MCF 10A (cell line): ENCODE measurements at regions of chr12 and their contacts with region 1.

Region 1: DNA sequence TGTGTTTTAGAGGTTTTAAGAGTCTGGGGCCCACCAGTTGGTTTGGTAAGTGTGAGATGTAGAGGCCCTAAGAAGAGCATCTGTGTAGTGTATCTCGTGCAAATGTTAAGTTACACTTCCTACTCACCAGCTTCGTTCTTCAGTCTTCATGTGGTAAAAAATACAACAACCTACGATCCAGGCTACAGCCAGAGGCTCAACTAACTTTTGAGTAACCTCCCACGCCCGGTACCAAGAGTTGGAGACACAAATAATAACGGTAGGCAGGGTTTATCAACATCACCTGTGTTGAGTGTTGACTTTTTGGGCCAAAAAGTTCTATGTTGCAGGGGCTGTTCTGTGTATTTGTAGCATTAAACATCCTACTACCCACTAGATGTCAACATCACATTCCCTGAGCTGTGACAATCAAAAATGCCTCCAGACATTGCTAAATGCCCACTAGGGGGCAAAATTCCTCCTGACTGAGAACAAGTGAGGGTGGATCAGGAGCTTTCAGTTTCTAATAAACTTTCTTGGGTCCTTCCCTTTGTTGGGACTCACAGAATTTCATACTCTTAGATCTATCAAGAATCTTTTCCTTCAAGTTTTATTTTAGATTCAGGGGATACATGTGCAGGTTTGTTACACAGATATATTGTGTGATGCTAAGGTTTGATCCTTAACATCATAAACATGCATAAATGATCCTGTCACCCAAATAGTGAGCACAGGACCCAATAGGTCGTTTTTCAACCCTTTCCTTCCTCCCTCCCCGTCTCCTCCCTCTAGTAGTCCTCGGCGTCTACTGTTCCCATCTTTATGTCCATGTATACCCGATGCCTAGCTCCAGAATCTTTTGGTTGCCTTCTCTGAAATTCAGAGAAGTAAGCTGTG is 94.7 kb downstream of the SLC2A13 start:
- DNase-seq: peak; percentile 83
- H3K4me3 Mint-ChIP-seq: peak overlapping the region; percentile 40
- H3K27ac Mint-ChIP-seq: no peak overlapping the region
- H3K4me1 Mint-ChIP-seq: peaks cover 13% of the 10 kb centered on the region
- H3K27me3 Mint-ChIP-seq: no peaks in the 10 kb centered on the region
- CTCF ChIP-seq: peak; percentile 83

Region 2: GRCh38 chr12:39905152-39905551 is 106.0 kb before region 1 on chr12:
- CTCF ChIA-PET with region 1: no interaction called
- POLR2A ChIA-PET with region 1: no interaction called
- intact Hi-C with region 1: no loop called
- DNase-seq: peak; percentile 1
- H3K4me3 Mint-ChIP-seq: no peak overlapping the region
- H3K27ac Mint-ChIP-seq: no peak overlapping the region
- H3K4me1 Mint-ChIP-seq: no peaks in the 10 kb centered on the region
- H3K27me3 Mint-ChIP-seq: no peaks in the 10 kb centered on the region
- CTCF ChIP-seq: no peak

Region 3: GRCh38 chr12:40032433-40033241 is 21.5 kb after region 1 on chr12:
- CTCF ChIA-PET with region 1: interaction called, 21 read pairs
- POLR2A ChIA-PET with region 1: interaction called, 4 read pairs
- intact Hi-C with region 1: no loop called
- DNase-seq: no peak
- H3K4me3 Mint-ChIP-seq: no peak overlapping the region
- H3K27ac Mint-ChIP-seq: no peak overlapping the region
- H3K4me1 Mint-ChIP-seq: peaks cover 6% of the 10 kb centered on the region
- H3K27me3 Mint-ChIP-seq: no peaks in the 10 kb centered on the region
- CTCF ChIP-seq: no peak

Region 4: DNA sequence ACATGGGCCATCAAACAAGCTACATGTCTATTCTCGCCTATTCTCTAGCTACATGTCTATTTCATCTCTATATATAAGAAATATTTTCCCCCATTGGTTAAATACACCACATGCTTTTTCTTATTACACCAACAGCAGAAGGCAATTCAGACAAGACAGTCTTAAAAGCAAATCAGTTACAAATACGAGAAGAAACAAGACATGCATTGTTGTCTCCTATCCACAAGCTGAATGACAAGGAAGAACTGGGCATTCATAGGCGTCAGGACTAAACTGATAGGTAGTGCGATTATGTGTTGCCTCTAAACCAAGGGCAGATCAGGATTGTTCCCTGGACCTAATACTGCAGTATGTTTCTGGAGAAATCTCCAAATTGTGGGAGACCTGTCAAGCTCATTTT is 75.3 kb after region 1 on chr12:
- CTCF ChIA-PET with region 1: interaction called, 11 read pairs
- POLR2A ChIA-PET with region 1: interaction called, 5 read pairs
- intact Hi-C with region 1: no loop called
- DNase-seq: no peak
- H3K4me3 Mint-ChIP-seq: no peak overlapping the region
- H3K27ac Mint-ChIP-seq: no peak overlapping the region
- H3K4me1 Mint-ChIP-seq: no peaks in the 10 kb centered on the region
- H3K27me3 Mint-ChIP-seq: no peaks in the 10 kb centered on the region
- CTCF ChIP-seq: no peak

Region 5: GRCh38 chr12:40117818-40118217 is 106.7 kb after region 1 on chr12:
- CTCF ChIA-PET with region 1: interaction called, 182 read pairs
- POLR2A ChIA-PET with region 1: no interaction called
- intact Hi-C with region 1: no loop called
- DNase-seq: no peak
- H3K4me3 Mint-ChIP-seq: no peak overlapping the region
- H3K27ac Mint-ChIP-seq: no peak overlapping the region
- H3K4me1 Mint-ChIP-seq: no peaks in the 10 kb centered on the region
- H3K27me3 Mint-ChIP-seq: no peaks in the 10 kb centered on the region
- CTCF ChIP-seq: no peak

Region 6: DNA sequence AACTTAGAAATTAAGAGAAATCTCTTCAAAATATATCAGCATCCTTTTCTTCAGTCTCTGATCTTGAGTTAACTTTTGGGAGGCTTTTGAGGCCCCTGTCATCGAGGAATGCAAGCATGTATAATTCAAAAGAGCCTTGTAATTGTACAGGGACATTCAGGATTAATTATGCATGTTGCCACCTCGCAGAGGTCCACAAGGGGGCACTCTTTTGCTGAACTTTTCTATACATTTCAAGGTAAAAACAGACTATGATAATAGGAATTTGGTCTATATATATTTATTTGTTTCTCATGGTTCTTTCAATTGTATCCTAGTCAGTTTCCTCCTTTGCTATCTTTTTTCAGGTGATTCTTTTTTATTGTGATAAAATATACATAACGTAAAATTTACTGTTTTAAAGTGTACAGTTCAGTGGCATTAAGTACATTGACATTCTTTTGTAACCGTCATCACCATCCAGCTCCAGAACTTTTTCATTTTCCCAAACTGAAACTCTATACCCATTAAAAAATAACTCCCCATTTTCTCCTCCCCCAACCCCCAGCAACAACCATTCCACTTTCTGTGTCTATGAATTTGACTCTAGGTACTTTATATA is 141.7 kb after region 1 on chr12:
- CTCF ChIA-PET with region 1: interaction called, 12 read pairs
- POLR2A ChIA-PET with region 1: no interaction called
- intact Hi-C with region 1: no loop called
- DNase-seq: peak; percentile 72
- H3K4me3 Mint-ChIP-seq: no peak overlapping the region
- H3K27ac Mint-ChIP-seq: no peak overlapping the region
- H3K4me1 Mint-ChIP-seq: peaks cover 28% of the 10 kb centered on the region
- H3K27me3 Mint-ChIP-seq: no peaks in the 10 kb centered on the region
- CTCF ChIP-seq: peak; percentile 74

Region 7: GRCh38 chr12:40158592-40159111 is 147.5 kb after region 1 on chr12:
- CTCF ChIA-PET with region 1: interaction called, 12 read pairs
- POLR2A ChIA-PET with region 1: no interaction called
- intact Hi-C with region 1: no loop called
- DNase-seq: peak; percentile 94
- H3K4me3 Mint-ChIP-seq: peak overlapping the region; percentile 56
- H3K27ac Mint-ChIP-seq: peak overlapping the region; percentile 90
- H3K4me1 Mint-ChIP-seq: peaks cover 21% of the 10 kb centered on the region
- H3K27me3 Mint-ChIP-seq: no peaks in the 10 kb centered on the region
- CTCF ChIP-seq: no peak

Region 8: DNA sequence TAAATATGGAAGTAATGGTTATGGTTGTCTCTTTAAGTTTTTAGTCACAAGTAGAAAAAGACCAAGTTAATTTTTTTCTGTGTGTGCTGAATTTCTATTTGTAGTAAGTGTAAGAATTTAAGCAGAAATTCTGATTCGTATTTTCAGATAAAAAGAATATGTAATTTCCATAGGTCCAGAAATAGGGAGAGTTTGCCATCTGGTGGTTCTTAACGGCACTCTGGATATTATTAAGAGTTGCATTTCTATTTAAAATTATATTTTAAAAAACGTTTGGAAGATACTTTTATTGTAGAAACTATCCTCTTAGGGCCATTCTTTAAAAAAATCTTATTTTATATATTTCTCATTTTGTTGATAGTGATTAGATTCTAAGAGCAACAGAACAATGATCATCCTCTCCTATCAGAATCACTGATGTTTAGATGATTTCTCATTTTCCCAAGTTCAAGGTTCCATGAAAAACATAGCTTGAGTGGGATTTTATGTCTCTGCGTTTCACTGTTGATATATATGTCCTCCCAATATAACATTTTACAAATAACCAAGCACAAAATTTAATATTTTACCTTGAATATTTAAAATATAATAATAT is 301.9 kb after region 1 on chr12:
- CTCF ChIA-PET with region 1: interaction called, 60 read pairs
- POLR2A ChIA-PET with region 1: interaction called, 3 read pairs
- intact Hi-C with region 1: loop called (anchors 1 kb)
- DNase-seq: peak; percentile 34
- H3K4me3 Mint-ChIP-seq: no peak overlapping the region
- H3K27ac Mint-ChIP-seq: no peak overlapping the region
- H3K4me1 Mint-ChIP-seq: peaks cover 6% of the 10 kb centered on the region
- H3K27me3 Mint-ChIP-seq: no peaks in the 10 kb centered on the region
- CTCF ChIP-seq: peak; percentile 61

Region 9: GRCh38 chr12:40643506-40643905 is 632.4 kb after region 1 on chr12:
- CTCF ChIA-PET with region 1: no interaction called
- POLR2A ChIA-PET with region 1: no interaction called
- intact Hi-C with region 1: no loop called
- DNase-seq: no peak
- H3K4me3 Mint-ChIP-seq: no peak overlapping the region
- H3K27ac Mint-ChIP-seq: no peak overlapping the region
- H3K4me1 Mint-ChIP-seq: no peaks in the 10 kb centered on the region
- H3K27me3 Mint-ChIP-seq: peaks cover under 1% of the 10 kb centered on the region
- CTCF ChIP-seq: no peak